ENCODE measurements at regions of chr11 and their contacts with region 1.

Region 1: DNA sequence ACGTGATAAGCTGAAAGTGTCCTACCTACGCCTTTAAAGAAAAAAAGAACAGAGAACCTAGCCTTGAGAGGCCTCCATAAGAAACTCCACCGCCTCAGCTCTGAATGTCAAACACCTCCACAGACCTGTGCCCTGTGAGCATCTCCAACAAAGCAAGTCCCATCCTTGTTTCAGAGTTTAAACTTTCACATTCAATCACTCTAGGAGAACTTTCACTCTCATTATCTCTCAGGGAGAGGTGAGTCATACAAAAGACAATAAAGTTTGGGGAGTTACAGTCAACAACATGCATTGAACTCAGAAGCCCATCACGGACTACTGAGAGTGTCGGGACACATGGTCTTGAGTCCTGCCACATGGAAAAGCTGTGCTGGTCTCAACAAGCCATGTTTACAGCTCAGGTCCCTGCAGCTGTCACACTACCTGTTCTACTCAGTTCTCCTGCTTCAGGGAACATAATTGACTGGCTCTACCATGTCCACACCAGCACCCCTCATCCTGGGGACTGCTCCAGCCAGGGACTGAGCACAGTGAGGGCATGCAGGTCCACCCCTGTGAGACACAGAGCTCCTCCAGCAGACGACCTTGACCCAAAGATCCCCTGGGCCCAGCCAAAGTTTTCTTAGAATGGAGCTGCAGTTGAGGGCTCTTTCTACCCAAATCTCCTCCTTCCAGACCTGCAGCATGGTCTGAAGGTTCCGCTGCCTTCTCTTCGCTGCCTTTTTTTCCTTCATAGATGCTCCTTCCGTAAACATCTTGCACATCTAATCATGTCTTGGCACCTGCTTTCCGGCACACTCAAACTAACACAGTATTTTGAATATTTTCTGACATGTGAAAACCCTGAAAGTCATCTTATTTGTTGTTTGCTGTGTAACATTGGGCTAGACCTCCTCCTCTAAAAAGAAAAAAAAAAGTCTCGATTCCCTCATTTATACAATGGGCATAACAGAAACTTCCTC is 114.9 kb downstream of the ETS1 start:
- DNase-seq: no peak
- ATAC-seq: no peak
- H3K4me3 ChIP-seq: no peak overlapping the region
- H3K27ac ChIP-seq: peak overlapping the region in 7 of 10 donors; percentile 35 to 84 (median 50)
- H3K4me1 ChIP-seq: peaks cover 30 to 100% (median 96%) of the 10 kb centered on the region in 9 donors
- H3K27me3 ChIP-seq: no peaks in the 10 kb centered on the region
- CTCF ChIP-seq: no peak

Region 2: GRCh38 chr11:128323381-128323780 is 149.0 kb before region 1 on chr11:
- intact Hi-C with region 1: loop called in 1 of 10 experiments (anchors 10 kb)
- DNase-seq: peak in 1 of 2 donors; percentile 32
- ATAC-seq: peak in 7 of 8 donors; percentile 26 to 58 (median 44)
- H3K4me3 ChIP-seq: no peak overlapping the region
- H3K27ac ChIP-seq: peak overlapping the region in 1 of 10 donors; percentile 77
- H3K4me1 ChIP-seq: peaks cover 0 to 28% (median 8%) of the 10 kb centered on the region in 9 donors
- H3K27me3 ChIP-seq: no peaks in the 10 kb centered on the region
- CTCF ChIP-seq: peak in 7 of 9 donors; percentile 25 to 60 (median 45)

Region 3: GRCh38 chr11:128342511-128343134 is 129.8 kb before region 1 on chr11:
- intact Hi-C with region 1: loop called in 4 of 10 experiments (anchors 5 to 10 kb)
- DNase-seq: peak; percentile 30 to 75
- ATAC-seq: peak; percentile 86 to 96 (median 92)
- H3K4me3 ChIP-seq: no peak overlapping the region
- H3K27ac ChIP-seq: peak overlapping the region in 9 of 10 donors; percentile 61 to 83 (median 76)
- H3K4me1 ChIP-seq: peaks cover 0 to 43% (median 34%) of the 10 kb centered on the region in 9 donors
- H3K27me3 ChIP-seq: no peaks in the 10 kb centered on the region
- CTCF ChIP-seq: no peak

Region 4: DNA sequence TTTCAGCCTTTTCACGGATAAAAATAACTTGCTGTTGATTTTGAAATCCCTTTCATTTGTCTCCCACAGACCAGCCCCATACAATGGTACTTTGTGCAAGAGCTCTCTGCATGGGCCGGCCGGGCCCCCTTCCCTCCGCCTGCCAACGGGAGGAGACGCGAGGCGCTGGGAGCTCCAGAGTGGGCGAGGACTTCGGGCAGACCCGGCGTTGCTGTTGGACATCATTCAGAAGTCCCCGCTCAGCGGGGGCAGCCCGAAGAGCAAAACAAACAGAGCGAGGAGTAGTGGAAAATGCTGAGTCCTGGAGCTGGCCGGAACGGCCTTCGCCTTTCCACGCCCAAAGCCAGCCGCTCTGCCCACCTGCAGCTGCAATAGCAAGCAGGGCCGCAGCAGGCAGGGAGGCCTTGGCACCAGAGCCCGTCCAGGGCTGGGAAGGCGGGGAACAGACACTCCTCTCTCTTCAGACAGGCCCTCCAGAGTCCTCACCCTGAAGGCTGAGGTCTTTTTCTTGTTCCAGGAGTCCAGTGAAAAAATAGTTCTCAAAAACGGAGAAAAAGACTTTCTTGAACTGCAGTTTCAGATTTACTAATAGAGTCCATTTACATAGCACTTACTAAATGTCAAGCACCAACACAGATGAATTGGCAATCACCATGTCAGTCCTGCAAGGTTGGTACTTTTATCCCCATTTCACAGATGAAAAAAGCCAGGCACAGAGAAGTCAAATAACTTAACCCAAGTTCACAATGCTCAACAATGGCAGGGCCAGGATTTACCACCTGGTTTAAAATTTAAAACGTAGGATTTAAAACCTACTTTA is 20.5 kb before region 1 on chr11:
- intact Hi-C with region 1: no loop called
- DNase-seq: peak; percentile 74 to 75
- ATAC-seq: peak; percentile 54 to 87 (median 79)
- H3K4me3 ChIP-seq: peak overlapping the region in 8 of 10 donors; percentile 5 to 44 (median 28)
- H3K27ac ChIP-seq: peak overlapping the region; percentile 30 to 79 (median 67)
- H3K4me1 ChIP-seq: peaks cover 0 to 51% (median 40%) of the 10 kb centered on the region in 9 donors
- H3K27me3 ChIP-seq: no peaks in the 10 kb centered on the region
- CTCF ChIP-seq: no peak

Region 5: DNA sequence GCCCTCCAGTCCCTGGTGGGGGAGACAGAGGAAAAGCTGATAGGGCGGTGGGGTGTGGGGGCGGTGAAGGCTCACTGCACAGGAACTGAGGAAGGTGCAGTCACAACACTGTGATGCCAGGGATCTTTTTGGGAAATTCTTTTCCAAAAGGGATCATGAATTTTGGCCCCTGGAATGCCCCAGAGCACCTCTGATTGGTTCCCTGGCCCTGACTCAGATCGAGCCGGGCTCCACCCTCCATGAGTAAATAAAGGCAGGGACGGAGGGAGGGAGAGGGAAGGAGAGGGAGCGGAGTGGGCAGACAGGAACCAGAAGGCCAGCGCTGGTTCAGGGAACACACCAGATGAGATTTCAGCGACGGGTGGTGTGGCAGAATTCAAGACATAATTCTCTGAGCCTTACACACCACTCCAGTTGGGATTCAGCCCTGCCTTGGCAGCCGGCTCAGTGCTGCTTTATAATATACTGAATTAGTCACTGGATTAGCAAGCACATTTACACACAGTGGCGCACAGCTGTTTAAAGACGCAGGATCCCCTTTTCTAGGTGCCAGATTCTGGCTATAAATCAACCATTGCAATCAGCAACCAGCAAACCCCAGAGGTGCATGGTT is 34.7 kb after region 1 on chr11:
- intact Hi-C with region 1: loop called in 2 of 10 experiments (anchors 5 kb)
- DNase-seq: peak; percentile 75 to 79
- ATAC-seq: peak; percentile 76 to 96 (median 80)
- H3K4me3 ChIP-seq: peak overlapping the region; percentile 8 to 48 (median 36)
- H3K27ac ChIP-seq: peak overlapping the region; percentile 79 to 97 (median 88)
- H3K4me1 ChIP-seq: peaks cover 30 to 100% (median 100%) of the 10 kb centered on the region in 9 donors
- H3K27me3 ChIP-seq: no peaks in the 10 kb centered on the region
- CTCF ChIP-seq: no peak

Region 6: DNA sequence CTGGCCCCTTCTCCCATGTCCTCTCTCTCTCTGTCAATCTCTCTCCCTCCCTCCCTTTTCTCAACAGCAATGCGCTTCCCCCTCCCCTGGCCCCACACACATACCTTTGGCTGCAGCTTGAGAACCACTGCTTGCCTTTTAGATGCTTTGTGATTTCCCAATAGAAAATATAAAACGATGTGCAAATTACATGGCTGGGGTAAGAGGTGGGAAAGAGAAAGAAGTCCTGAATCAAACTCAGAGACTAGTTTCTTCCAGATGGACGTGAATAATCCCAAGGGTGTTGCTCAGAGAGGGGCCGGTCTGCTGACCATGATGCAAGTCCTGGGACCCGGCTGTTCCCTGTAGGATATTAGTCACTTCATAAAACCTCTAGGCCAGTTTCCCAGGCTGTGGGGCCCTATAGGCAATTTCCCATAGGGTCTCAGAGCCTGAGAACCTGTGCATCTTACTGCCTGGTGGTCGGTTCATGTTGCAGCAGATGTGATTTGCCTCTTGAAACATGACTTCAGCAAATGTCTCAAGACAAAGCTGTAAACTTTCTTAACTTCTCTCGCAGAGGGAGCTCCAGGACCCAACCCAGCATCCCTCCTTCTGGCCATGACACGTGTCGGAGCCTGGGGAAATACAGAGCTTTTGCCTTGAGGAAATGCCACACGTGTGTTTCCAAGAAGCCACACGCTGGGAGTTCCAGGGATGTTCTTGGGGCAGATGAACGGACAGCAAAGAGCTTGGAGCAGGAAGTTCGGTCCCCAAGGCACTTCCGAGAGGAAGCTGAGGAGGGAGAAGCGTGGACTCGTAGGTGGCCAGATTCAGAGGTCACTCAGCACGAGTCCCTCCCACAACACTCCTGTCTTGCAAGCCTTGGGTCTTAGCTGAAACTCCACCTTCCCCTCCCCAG is 149.4 kb after region 1 on chr11:
- intact Hi-C with region 1: no loop called
- DNase-seq: peak; percentile 29 to 73
- ATAC-seq: peak; percentile 53 to 87 (median 75)
- H3K4me3 ChIP-seq: peak overlapping the region in 5 of 10 donors; percentile 1 to 32 (median 18)
- H3K27ac ChIP-seq: peak overlapping the region in 8 of 10 donors; percentile 20 to 78 (median 68)
- H3K4me1 ChIP-seq: peaks cover 0 to 61% (median 13%) of the 10 kb centered on the region in 9 donors
- H3K27me3 ChIP-seq: no peaks in the 10 kb centered on the region
- CTCF ChIP-seq: no peak